CD8-positive, alpha-beta T cell (primary cell): ENCODE measurements at regions of chr17 and their contacts with region 1.

Region 1: DNA sequence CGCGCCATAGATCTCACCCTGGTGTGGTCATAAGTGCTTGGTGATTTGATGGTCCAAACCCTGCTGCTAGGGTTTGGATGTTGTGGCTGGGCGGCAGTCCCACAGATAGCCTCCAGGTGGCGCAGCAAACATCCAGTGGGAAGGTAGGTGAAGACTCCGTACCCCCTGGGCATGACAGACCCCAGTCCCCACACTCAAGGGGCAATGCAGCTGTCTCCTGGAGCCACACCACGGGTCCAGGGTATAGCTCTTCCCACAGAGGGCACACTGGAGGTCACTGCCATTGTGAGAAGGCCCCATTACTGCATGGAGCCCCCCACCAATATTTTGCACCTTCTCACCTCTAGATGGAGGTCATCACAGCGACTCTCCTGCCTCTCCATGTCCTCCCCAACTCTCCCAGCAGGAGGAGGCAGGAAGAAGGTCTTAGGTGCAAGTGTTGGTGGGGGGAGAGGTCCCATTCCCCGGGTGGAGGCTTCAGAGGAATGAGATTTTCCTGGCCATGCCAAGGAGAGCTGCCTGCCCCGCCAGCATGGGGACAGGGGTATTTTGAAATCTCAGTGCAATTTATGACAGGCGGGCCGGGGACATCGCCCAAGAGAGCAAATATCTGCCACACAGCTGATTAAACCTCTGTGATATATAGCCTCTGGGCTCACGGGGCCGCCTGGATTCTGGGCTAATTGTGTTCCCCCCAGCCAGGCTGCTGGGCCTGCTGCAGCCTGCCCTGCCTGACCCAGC is 17.1 kb upstream of the C17orf113 start:
- DNase-seq: peak; percentile 49 to 80 (median 71)
- ATAC-seq: peak; percentile 50
- H3K4me3 ChIP-seq: no peak overlapping the region
- H3K4me3 Mint-ChIP-seq: no peak overlapping the region
- H3K27ac ChIP-seq: no peak overlapping the region
- H3K27ac Mint-ChIP-seq: no peak overlapping the region
- H3K4me1 ChIP-seq: peaks cover 35% of the 10 kb centered on the region
- H3K4me1 Mint-ChIP-seq: peaks cover 31% of the 10 kb centered on the region
- H3K27me3 ChIP-seq: peaks cover 0 to 8% of the 10 kb centered on the region in 2 experiments
- H3K27me3 Mint-ChIP-seq: peaks cover 6% of the 10 kb centered on the region
- CTCF ChIP-seq: peak; percentile 87

Region 2: DNA sequence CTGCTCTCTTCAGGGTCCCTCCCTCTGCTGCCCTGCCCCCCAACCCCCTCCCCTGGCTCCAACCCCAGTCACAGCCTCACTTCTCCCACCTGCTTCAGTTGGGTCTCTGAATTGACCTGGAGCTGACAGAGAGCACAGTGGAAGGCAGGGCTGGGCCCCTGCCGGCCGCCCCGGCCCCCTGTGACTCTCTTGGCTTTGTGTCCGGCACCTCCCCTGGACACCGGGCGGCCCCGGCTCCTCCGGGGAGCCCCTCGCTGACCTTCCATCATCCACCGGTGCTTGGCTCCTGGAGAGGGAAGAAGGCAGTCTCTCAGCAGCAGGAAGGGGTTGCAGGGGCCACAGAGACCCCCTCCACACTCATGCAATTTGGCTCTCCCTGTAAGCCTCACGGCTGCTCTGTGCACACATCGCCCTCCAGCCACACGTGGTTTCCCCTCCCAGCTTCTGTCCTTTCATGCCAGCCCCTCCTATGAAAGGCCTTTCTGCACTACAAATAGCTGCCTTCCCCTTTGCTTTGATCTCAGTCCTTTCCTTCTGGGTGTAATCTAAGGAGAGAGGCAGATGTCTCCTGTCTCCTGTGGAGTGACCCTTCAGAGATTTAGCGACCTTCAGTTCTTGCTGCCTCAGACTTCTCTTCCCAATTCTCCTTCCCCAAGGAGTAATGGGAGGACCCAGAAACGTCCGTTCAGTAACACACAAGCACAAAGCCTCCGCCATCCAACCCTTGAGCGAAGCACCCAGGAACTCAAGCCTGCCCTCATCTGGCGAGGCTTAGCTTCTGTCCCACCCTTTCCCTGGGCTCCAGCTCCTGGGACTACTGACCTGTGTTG is 39.3 kb before region 1 on chr17:
- CTCF ChIA-PET with region 1: interaction called, 17 read pairs
- POLR2A ChIA-PET with region 1: no interaction called
- intact Hi-C with region 1: loop called (anchors 1 to 2 kb)
- DNase-seq: no peak
- ATAC-seq: no peak
- H3K4me3 ChIP-seq: no peak overlapping the region
- H3K4me3 Mint-ChIP-seq: no peak overlapping the region
- H3K27ac ChIP-seq: no peak overlapping the region
- H3K27ac Mint-ChIP-seq: no peak overlapping the region
- H3K4me1 ChIP-seq: peaks cover 6% of the 10 kb centered on the region
- H3K4me1 Mint-ChIP-seq: peaks cover 5% of the 10 kb centered on the region
- H3K27me3 ChIP-seq: peaks cover 0 to 5% of the 10 kb centered on the region in 2 experiments
- H3K27me3 Mint-ChIP-seq: peaks cover 10% of the 10 kb centered on the region
- CTCF ChIP-seq: no peak

Region 3: DNA sequence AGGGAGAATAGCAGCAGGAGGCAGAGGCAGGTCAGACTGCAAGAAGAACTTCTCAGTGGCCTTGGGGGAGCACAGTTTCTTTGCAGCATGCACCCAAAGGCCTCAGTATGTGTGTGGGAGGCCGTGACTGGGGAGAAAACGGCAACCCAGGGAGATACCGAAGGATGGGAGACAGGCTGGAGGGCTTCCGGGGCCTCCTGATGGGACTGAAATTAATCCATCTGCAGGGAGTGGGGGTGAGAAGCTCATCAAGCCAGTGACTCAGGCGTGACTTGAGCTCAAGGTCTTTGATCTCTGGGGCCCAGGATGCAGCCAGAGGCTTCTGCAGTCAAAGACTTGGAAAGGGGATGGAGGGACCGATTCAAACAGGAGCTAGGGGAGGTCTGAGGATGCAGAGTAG is 12.0 kb before region 1 on chr17:
- CTCF ChIA-PET with region 1: interaction called, 17 read pairs
- POLR2A ChIA-PET with region 1: no interaction called
- intact Hi-C with region 1: no loop called
- DNase-seq: no peak
- ATAC-seq: no peak
- H3K4me3 ChIP-seq: no peak overlapping the region
- H3K4me3 Mint-ChIP-seq: no peak overlapping the region
- H3K27ac ChIP-seq: no peak overlapping the region
- H3K27ac Mint-ChIP-seq: no peak overlapping the region
- H3K4me1 ChIP-seq: no peaks in the 10 kb centered on the region
- H3K4me1 Mint-ChIP-seq: peaks cover 5% of the 10 kb centered on the region
- H3K27me3 ChIP-seq: no peaks in the 10 kb centered on the region
- H3K27me3 Mint-ChIP-seq: peaks cover 24% of the 10 kb centered on the region
- CTCF ChIP-seq: no peak

Region 4: GRCh38 chr17:42077755-42078154 is 10.2 kb after region 1 on chr17:
- CTCF ChIA-PET with region 1: interaction called, 10 read pairs
- POLR2A ChIA-PET with region 1: no interaction called
- intact Hi-C with region 1: no loop called
- DNase-seq: no peak
- ATAC-seq: no peak
- H3K4me3 ChIP-seq: no peak overlapping the region
- H3K4me3 Mint-ChIP-seq: no peak overlapping the region
- H3K27ac ChIP-seq: no peak overlapping the region
- H3K27ac Mint-ChIP-seq: no peak overlapping the region
- H3K4me1 ChIP-seq: no peaks in the 10 kb centered on the region
- H3K4me1 Mint-ChIP-seq: peaks cover 5% of the 10 kb centered on the region
- H3K27me3 ChIP-seq: peaks cover 0 to 3% of the 10 kb centered on the region in 2 experiments
- H3K27me3 Mint-ChIP-seq: peaks cover 12% of the 10 kb centered on the region
- CTCF ChIP-seq: no peak

Region 5: GRCh38 chr17:42101513-42102319 is 34.2 kb after region 1 on chr17:
- CTCF ChIA-PET with region 1: interaction called, 22 read pairs
- POLR2A ChIA-PET with region 1: no interaction called
- intact Hi-C with region 1: loop called (anchors 1 kb)
- DNase-seq: peak in 8 of 9 experiments; percentile 47 to 73 (median 66)
- ATAC-seq: peak; percentile 52
- H3K4me3 ChIP-seq: no peak overlapping the region
- H3K4me3 Mint-ChIP-seq: no peak overlapping the region
- H3K27ac ChIP-seq: no peak overlapping the region
- H3K27ac Mint-ChIP-seq: no peak overlapping the region
- H3K4me1 ChIP-seq: peaks cover 9% of the 10 kb centered on the region
- H3K4me1 Mint-ChIP-seq: peaks cover 8% of the 10 kb centered on the region
- H3K27me3 ChIP-seq: no peaks in the 10 kb centered on the region
- H3K27me3 Mint-ChIP-seq: peaks cover 5% of the 10 kb centered on the region
- CTCF ChIP-seq: peak; percentile 76

Region 6: DNA sequence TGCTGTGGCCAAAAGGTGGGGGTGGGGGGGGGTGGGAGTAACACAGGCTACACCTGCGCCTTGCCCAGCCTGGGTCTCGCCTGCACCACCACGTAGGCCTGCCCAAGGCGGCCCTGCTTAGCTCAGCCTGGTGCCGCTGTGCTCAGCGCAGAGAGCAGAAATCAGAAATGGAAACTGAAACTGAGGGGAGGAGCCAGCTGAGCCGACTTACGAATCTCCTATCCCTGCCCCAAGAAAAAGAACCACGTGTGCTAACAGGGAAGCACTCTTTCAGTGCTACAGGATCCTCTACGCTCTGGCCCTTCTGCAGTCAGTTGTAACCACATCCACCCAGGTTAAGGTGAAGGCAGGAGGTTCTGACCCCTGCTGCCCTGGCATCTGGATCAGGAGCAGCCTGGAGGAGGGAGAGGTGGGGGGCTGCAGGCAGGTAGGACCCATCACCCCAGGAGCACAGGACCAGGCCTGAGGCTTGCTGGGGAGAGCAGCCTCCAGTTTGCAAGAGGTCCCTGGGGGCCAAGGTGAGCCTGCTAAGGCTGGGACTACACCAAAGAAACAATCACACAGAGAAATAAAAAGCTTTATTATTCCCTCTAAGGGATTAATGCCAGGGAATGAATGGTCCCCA is 45.1 kb after region 1 on chr17 and contains the start of gene DHX58:
- CTCF ChIA-PET with region 1: interaction called, 172 read pairs
- POLR2A ChIA-PET with region 1: interaction called, 4 read pairs
- intact Hi-C with region 1: loop called (anchors 1 kb)
- DNase-seq: peak; percentile 65 to 94 (median 81)
- ATAC-seq: peak; percentile 80
- H3K4me3 ChIP-seq: peak within 1 kb of the TSS; percentile 66 to 88
- H3K4me3 Mint-ChIP-seq: peak within 1 kb of the TSS; percentile 92
- H3K27ac ChIP-seq: peak within 1 kb of the TSS; percentile 81 to 90
- H3K27ac Mint-ChIP-seq: peak within 1 kb of the TSS; percentile 95
- H3K4me1 ChIP-seq: peaks cover 30% of the 10 kb centered on the region
- H3K4me1 Mint-ChIP-seq: peaks cover 49% of the 10 kb centered on the region
- H3K27me3 ChIP-seq: no peaks in the 10 kb centered on the region
- H3K27me3 Mint-ChIP-seq: no peaks in the 10 kb centered on the region
- CTCF ChIP-seq: no peak
- total RNA-seq, gene DHX58: 32.8 to 39.1 TPM

Region 7: GRCh38 chr17:42120770-42121769 is 53.5 kb after region 1 on chr17 and contains the start of gene KAT2A:
- CTCF ChIA-PET with region 1: interaction called, 172 read pairs
- POLR2A ChIA-PET with region 1: interaction called, 3 read pairs
- intact Hi-C with region 1: loop called (anchors 1 kb)
- DNase-seq: peak; percentile 52 to 89 (median 75)
- ATAC-seq: peak; percentile 88
- H3K4me3 ChIP-seq: peak within 1 kb of the TSS; percentile 38 to 65
- H3K4me3 Mint-ChIP-seq: peak within 1 kb of the TSS; percentile 76
- H3K27ac ChIP-seq: no peak within 1 kb of the TSS
- H3K27ac Mint-ChIP-seq: no peak within 1 kb of the TSS
- H3K4me1 ChIP-seq: peaks cover 13% of the 10 kb centered on the region
- H3K4me1 Mint-ChIP-seq: peaks cover 22% of the 10 kb centered on the region
- H3K27me3 ChIP-seq: no peaks in the 10 kb centered on the region
- H3K27me3 Mint-ChIP-seq: no peaks in the 10 kb centered on the region
- CTCF ChIP-seq: no peak
- total RNA-seq, gene KAT2A: 39.3 to 42.5 TPM

Region 8: DNA sequence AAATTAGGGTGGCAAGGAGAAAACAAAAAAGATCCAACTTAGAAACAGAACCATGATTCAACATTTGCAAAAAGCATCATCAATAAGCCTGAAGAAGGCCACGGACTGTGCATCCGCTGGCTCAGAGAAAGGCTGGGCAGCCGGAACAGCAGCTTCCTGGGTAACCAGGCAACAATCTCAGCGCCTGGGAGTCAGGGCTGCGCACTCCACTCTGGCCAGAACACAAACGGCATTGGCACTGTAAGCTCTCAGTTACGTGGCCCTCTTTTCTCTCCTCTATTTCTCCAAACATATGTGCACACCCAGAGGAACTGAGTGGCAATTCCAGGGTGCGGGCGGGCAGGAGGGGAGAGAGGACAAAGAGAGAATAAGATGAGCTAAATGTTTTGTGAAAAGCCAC is 133.2 kb after region 1 on chr17:
- CTCF ChIA-PET with region 1: no interaction called
- POLR2A ChIA-PET with region 1: no interaction called
- intact Hi-C with region 1: no loop called
- DNase-seq: no peak
- ATAC-seq: no peak
- H3K4me3 ChIP-seq: no peak overlapping the region
- H3K4me3 Mint-ChIP-seq: no peak overlapping the region
- H3K27ac ChIP-seq: no peak overlapping the region
- H3K27ac Mint-ChIP-seq: no peak overlapping the region
- H3K4me1 ChIP-seq: no peaks in the 10 kb centered on the region
- H3K4me1 Mint-ChIP-seq: peaks cover 3% of the 10 kb centered on the region
- H3K27me3 ChIP-seq: no peaks in the 10 kb centered on the region
- H3K27me3 Mint-ChIP-seq: no peaks in the 10 kb centered on the region
- CTCF ChIP-seq: no peak